HepG2 (cell line): ENCODE measurements at regions of chr5 and their contacts with region 1.

Region 1: GRCh38 chr5:154196955-154197652 is 6.6 kb downstream of the GALNT10 start:
- DNase-seq: peak; percentile 46
- ATAC-seq: peak; percentile 68
- H3K4me3 ChIP-seq: no peak overlapping the region
- H3K27ac ChIP-seq: no peak overlapping the region
- H3K4me1 ChIP-seq: peaks cover 37% of the 10 kb centered on the region
- H3K27me3 ChIP-seq: no peaks in the 10 kb centered on the region
- CTCF ChIP-seq: peak; percentile 45
- EP300 ChIP-seq: no peak
- POLR2A ChIP-seq: no peak
- RAD21 ChIP-seq: no peak

Region 2: DNA sequence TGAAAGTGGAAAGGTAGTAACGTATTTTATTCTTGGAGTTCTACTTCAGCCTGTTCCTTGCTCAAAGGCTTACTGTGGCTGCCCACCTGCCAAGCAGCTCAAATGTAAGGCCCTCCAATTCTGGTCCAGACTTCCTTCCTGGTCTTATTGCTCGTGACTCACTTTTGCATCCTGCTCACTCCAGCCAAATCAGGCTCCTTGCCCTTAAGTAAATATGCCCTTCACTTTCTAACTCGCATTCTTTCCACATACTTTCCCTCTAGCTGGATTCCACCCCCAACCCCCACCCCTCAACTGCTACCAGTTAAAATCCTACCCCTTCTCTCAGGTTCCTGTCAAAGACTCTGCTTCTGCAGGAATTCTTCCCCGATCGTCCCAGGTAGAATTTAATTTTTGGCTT is 90.0 kb after region 1 on chr5:
- CTCF ChIA-PET with region 1: no interaction called
- POLR2A ChIA-PET with region 1: no interaction called
- in situ Hi-C with region 1: no loop called
- intact Hi-C with region 1: loop called (anchors 2 kb)
- DNase-seq: peak; percentile 80
- ATAC-seq: peak; percentile 79
- H3K4me3 ChIP-seq: no peak overlapping the region
- H3K27ac ChIP-seq: no peak overlapping the region
- H3K4me1 ChIP-seq: peaks cover 50% of the 10 kb centered on the region
- H3K27me3 ChIP-seq: no peaks in the 10 kb centered on the region
- CTCF ChIP-seq: no peak
- EP300 ChIP-seq: peak in 1 of 2 experiments; percentile 26; a peak in 1 of 4 replicates
- POLR2A ChIP-seq: no peak
- RAD21 ChIP-seq: no peak